ENCODE measurements at regions of chr1 and their contacts with region 1.

Region 1: GRCh38 chr1:178066908-178067614 is 26.8 kb upstream of the RASAL2 start:
- H3K4me3 Mint-ChIP-seq: peak overlapping the region; percentile 1
- H3K27ac Mint-ChIP-seq: peak overlapping the region; percentile 97
- H3K4me1 Mint-ChIP-seq: peaks cover 55% of the 10 kb centered on the region
- H3K27me3 Mint-ChIP-seq: no peaks in the 10 kb centered on the region

Region 2: DNA sequence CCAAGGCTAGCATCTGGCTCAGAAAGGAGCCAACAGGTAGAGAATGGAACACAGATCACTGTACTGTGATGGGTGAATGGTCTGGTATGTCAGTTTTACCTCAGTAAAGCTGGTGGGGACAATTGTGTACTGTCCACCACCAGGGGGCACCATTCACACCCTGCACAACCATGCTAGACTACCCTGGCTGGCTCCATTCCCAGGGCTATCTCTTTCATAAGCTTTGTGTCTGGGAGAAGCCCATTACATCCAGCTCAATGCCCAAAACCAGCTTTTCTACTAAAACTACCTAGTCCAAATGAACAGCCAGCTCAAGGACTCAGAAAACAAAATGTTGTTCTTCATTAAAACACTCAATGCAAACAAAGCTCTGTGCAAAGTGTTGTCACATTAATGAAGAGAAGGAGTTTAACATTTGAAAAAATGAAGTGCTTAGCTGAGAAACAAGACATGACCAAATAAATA is 35.2 kb before region 1 on chr1:
- intact Hi-C with region 1: no loop called
- H3K4me3 Mint-ChIP-seq: no peak overlapping the region
- H3K27ac Mint-ChIP-seq: no peak overlapping the region
- H3K4me1 Mint-ChIP-seq: peaks cover 7% of the 10 kb centered on the region
- H3K27me3 Mint-ChIP-seq: no peaks in the 10 kb centered on the region

Region 3: GRCh38 chr1:178126790-178127189 is 59.7 kb after region 1 on chr1:
- intact Hi-C with region 1: loop called (anchors 2 kb)
- H3K4me3 Mint-ChIP-seq: no peak overlapping the region
- H3K27ac Mint-ChIP-seq: peak overlapping the region; percentile 57
- H3K4me1 Mint-ChIP-seq: peaks cover 12% of the 10 kb centered on the region
- H3K27me3 Mint-ChIP-seq: no peaks in the 10 kb centered on the region